Activated CD4-positive, alpha-beta T cell treated with anti-CD3 and anti-CD28 coated beads, Interleukin-2, amount 10 ng/mL, durations not matched to agents 24 days and 14 days (primary cell): ENCODE measurements at regions of chr1 and their contacts with region 1.

Region 1: DNA sequence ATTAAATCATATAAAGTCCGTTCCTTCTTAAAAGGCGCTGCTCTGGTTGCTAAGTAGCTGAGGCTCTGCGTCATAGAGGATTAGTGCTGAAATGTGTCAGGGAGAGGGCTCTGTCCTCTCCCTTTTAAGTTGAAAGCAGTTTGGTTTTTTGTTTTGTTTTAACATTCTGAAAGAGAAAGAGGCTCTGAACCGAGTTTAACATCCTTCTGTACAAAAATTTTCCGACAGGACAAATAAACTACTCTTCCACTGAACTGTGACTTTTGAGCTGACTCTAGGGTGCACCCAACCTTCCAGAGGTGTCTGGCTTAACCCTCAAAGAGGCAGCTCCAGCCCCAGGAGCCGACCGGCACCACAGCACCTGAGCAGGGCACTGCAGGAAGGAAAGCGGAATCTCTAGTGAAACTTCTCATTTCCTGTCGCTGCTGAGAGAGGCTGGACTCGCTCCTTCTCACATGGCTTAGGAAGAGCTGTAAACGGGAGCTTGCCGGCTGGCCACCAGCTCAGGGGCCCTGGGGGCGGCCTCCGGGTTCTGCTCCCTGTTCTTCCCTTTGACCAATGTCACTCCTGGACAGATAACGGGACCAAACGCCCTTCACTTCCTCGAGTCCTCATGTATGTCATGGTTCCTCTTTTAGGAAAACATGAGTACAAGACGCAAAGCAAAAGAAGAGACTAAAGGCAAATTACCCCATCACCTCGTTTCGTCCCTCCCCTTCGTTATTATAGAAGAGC is 1.2 kb downstream of the VAV3 start:
- DNase-seq: peak; percentile 86
- H3K4me3 Mint-ChIP-seq: peak overlapping the region; percentile 91
- H3K27ac Mint-ChIP-seq: peak overlapping the region; percentile 92
- H3K4me1 Mint-ChIP-seq: peaks cover 23% of the 10 kb centered on the region
- H3K27me3 Mint-ChIP-seq: peaks cover 3% of the 10 kb centered on the region

Region 2: DNA sequence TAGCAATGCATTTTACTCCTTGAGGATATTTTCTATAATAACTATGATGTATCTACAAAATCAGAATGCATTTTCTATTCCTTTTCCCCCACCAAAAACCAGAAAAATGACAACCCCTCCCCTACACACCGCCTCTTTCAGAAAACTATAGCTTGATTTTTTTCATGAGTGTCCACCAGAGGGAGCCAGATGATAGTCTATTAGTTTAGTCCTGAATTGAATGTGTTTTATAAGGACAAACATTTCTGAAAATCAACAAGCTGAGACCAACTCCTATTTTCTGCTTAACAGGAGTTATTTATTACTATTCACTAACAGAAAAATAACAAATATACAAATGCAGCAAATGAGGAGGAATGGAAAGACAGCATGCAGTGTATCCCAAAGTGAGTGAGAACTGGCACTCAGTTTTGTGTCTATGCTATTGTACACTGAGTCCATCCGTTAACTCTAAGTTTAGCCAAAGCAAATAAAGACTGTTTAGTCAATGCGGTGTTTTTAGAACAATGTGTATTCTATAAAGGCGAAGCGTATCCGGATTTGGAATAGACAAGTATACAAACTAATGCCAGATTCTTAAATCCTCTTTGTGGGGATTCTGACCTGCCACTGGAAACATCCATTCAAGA is 181.4 kb before region 1 on chr1:
- intact Hi-C with region 1: loop called (anchors 2 kb)
- DNase-seq: peak; percentile 86
- H3K4me3 Mint-ChIP-seq: no peak overlapping the region
- H3K27ac Mint-ChIP-seq: no peak overlapping the region
- H3K4me1 Mint-ChIP-seq: peaks cover 22% of the 10 kb centered on the region
- H3K27me3 Mint-ChIP-seq: no peaks in the 10 kb centered on the region

Region 3: GRCh38 chr1:107877092-107877491 is 86.7 kb before region 1 on chr1:
- intact Hi-C with region 1: loop called (anchors 5 kb)
- DNase-seq: no peak
- H3K4me3 Mint-ChIP-seq: no peak overlapping the region
- H3K27ac Mint-ChIP-seq: no peak overlapping the region
- H3K4me1 Mint-ChIP-seq: peaks cover 2% of the 10 kb centered on the region
- H3K27me3 Mint-ChIP-seq: no peaks in the 10 kb centered on the region

Region 4: GRCh38 chr1:108041360-108042142 is 77.8 kb after region 1 on chr1:
- intact Hi-C with region 1: loop called (anchors 1 kb)
- DNase-seq: peak; percentile 57
- H3K4me3 Mint-ChIP-seq: peak overlapping the region; percentile 15
- H3K27ac Mint-ChIP-seq: peak overlapping the region; percentile 73
- H3K4me1 Mint-ChIP-seq: peaks cover 32% of the 10 kb centered on the region
- H3K27me3 Mint-ChIP-seq: no peaks in the 10 kb centered on the region

Region 5: GRCh38 chr1:108125312-108126138 is 161.8 kb after region 1 on chr1:
- intact Hi-C with region 1: loop called (anchors 1 kb)
- DNase-seq: peak; percentile 89
- H3K4me3 Mint-ChIP-seq: no peak overlapping the region
- H3K27ac Mint-ChIP-seq: no peak overlapping the region
- H3K4me1 Mint-ChIP-seq: no peaks in the 10 kb centered on the region
- H3K27me3 Mint-ChIP-seq: no peaks in the 10 kb centered on the region

Region 6: GRCh38 chr1:109790735-109791494 is 1827.1 kb after region 1 on chr1:
- intact Hi-C with region 1: no loop called
- DNase-seq: peak; percentile 94
- H3K4me3 Mint-ChIP-seq: peak overlapping the region; percentile 53
- H3K27ac Mint-ChIP-seq: peak overlapping the region; percentile 95
- H3K4me1 Mint-ChIP-seq: peaks cover 66% of the 10 kb centered on the region
- H3K27me3 Mint-ChIP-seq: no peaks in the 10 kb centered on the region